A673 (cell line): ENCODE measurements at regions of chr17 and their contacts with region 1.

Region 1: DNA sequence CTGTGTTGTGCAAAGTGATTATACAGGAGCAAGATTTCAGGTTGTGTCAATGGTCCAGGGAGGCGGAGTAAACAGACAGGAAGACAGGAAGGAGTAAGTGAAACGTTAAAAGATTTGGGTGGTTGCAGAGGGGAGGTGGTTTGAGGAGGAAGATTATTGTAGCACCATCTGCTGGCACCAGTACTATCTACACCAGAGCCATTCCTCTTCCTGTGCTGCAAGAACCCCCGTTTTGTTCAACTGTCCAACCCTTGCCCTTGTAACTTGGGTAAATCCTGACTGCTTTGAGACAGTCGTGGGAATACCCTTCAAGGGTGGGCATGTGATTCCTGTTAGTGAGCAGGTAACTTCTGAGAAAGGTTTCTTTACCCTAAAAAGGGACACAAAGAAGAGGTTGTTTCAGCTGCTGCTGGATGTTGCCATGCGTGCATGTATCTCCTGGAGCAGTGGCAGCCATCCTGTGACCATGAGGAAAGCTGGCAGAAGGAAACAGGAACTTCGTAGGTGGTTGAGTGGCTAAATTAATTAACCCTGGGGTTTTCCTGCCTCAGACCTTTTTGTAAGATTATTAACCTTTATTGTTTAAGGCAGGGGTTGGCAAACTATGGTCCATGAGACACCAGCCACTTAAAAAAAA is 124.1 kb downstream of the PRKCA start:
- DNase-seq: peak; percentile 75
- H3K4me3 ChIP-seq: no peak overlapping the region
- H3K27ac ChIP-seq: no peak overlapping the region
- H3K4me1 ChIP-seq: peaks cover 17% of the 10 kb centered on the region
- H3K27me3 ChIP-seq: no peaks in the 10 kb centered on the region
- CTCF ChIP-seq: peak; percentile 67

Region 2: GRCh38 chr17:66301797-66302741 is 124.4 kb before region 1 on chr17 and contains the start of gene PRKCA:
- CTCF ChIA-PET with region 1: no interaction called
- POLR2A ChIA-PET with region 1: no interaction called
- intact Hi-C with region 1: loop called (anchors 10 kb)
- DNase-seq: peak; percentile 84
- H3K4me3 ChIP-seq: peak within 1 kb of the TSS; percentile 74
- H3K27ac ChIP-seq: peak within 1 kb of the TSS; percentile 44
- H3K4me1 ChIP-seq: peaks cover 6% of the 10 kb centered on the region
- H3K27me3 ChIP-seq: no peaks in the 10 kb centered on the region
- CTCF ChIP-seq: no peak
- total RNA-seq, gene PRKCA: 15.7 and 16.3 TPM in 2 replicates

Region 3: DNA sequence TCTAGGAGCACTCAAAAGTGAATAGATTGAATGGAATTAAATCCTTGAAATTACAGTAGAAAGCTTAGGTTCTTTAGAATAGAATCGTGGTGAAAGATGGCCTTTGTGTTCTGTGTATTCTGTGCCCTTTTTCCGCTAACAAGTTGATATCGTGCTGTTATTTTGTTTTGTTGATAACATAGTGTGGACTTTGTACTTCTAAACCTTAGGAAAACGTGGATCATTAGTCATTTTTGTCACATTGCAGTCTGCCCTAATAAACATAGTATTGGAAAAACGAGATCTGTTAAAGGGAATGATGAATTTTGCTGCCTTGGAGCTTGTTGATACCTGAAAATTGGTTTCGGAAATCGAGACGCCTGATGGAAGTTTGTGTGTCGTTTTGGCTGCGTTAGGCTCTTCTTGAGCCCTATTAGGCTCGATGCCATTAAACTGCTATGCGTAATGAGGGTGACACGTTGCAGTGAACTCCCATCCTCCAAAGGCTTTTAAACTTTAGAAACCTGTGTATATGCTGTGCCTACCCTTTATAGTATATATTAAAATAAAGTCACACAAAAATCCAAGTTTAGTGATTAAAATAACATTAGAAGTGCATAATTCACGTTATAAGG is 21.6 kb after region 1 on chr17:
- CTCF ChIA-PET with region 1: interaction called, 10 read pairs
- POLR2A ChIA-PET with region 1: no interaction called
- intact Hi-C with region 1: no loop called
- DNase-seq: no peak
- H3K4me3 ChIP-seq: no peak overlapping the region
- H3K27ac ChIP-seq: no peak overlapping the region
- H3K4me1 ChIP-seq: peaks cover 8% of the 10 kb centered on the region
- H3K27me3 ChIP-seq: no peaks in the 10 kb centered on the region
- CTCF ChIP-seq: no peak

Region 4: GRCh38 chr17:66508896-66509843 is 82.7 kb after region 1 on chr17:
- CTCF ChIA-PET with region 1: no interaction called
- POLR2A ChIA-PET with region 1: no interaction called
- intact Hi-C with region 1: no loop called
- DNase-seq: no peak
- H3K4me3 ChIP-seq: no peak overlapping the region
- H3K27ac ChIP-seq: no peak overlapping the region
- H3K4me1 ChIP-seq: peaks cover 10% of the 10 kb centered on the region
- H3K27me3 ChIP-seq: no peaks in the 10 kb centered on the region
- CTCF ChIP-seq: no peak

Region 5: GRCh38 chr17:66985338-66986237 is 559.1 kb after region 1 on chr17:
- CTCF ChIA-PET with region 1: no interaction called
- POLR2A ChIA-PET with region 1: no interaction called
- intact Hi-C with region 1: no loop called
- DNase-seq: no peak
- H3K4me3 ChIP-seq: no peak overlapping the region
- H3K27ac ChIP-seq: no peak overlapping the region
- H3K4me1 ChIP-seq: no peaks in the 10 kb centered on the region
- H3K27me3 ChIP-seq: no peaks in the 10 kb centered on the region
- CTCF ChIP-seq: no peak